ENCODE measurements at regions of chr9 and their contacts with region 1.

Region 1: DNA sequence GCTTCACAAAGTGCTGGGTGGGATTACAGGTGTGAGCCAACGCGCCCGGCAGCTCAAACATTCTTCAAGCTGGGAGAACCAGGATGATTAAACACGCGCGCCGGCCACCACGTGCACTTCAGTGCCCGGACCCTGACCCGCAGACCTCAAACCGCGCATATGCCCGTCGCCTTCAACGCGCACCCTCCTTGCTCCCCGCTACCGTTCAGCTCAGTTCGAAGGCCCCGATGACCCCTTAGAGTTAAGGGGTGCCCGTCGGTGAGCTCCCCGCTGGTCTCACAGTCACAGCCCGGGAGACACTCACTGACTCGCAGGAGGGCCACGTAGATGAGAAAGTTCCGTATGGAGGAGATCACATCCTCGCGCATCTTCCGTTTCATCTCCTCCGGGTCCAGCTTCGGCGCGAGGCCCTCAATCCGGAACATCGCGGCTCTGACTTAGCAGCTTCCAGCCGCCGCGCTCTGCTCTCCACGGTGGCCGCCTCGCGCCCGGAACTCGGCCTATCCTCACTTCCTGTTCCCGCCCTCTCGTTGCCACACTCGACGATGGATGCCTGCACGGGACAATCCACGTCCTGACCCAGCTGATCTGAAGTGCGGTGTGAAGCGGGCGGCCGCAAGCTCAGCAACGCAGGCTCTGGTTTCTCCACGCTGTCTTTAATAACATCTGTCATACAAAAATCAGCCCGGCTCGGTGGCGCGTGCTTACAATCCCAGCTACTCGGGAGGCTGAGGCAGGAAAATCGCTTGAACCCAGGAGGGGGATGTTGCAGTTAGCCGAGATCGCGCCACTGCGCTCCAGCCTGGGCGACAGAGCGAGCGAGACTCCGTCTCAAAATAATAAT is at the start of gene TOMM5:
- DNase-seq: peak; percentile 89
- H3K4me3 ChIP-seq: peak within 1 kb of the TSS; percentile 78
- H3K27ac ChIP-seq: peak within 1 kb of the TSS; percentile 52
- H3K4me1 ChIP-seq: peaks cover 47% of the 10 kb centered on the region
- CTCF ChIP-seq: no peak
- total RNA-seq, gene TOMM5: 215 and 231 TPM in 2 replicates

Region 2: GRCh38 chr9:37575921-37576721 is 16.2 kb before region 1 on chr9 and contains the start of gene FBXO10:
- CTCF ChIA-PET with region 1: interaction called, 5 read pairs
- POLR2A ChIA-PET with region 1: interaction called, 37 read pairs
- intact Hi-C with region 1: no loop called
- DNase-seq: peak; percentile 73
- H3K4me3 ChIP-seq: peak within 1 kb of the TSS; percentile 78
- H3K27ac ChIP-seq: peak within 1 kb of the TSS; percentile 62
- H3K4me1 ChIP-seq: peaks cover 38% of the 10 kb centered on the region
- CTCF ChIP-seq: no peak
- total RNA-seq, gene FBXO10: 9.4 and 16.1 TPM in 2 replicates

Region 3: DNA sequence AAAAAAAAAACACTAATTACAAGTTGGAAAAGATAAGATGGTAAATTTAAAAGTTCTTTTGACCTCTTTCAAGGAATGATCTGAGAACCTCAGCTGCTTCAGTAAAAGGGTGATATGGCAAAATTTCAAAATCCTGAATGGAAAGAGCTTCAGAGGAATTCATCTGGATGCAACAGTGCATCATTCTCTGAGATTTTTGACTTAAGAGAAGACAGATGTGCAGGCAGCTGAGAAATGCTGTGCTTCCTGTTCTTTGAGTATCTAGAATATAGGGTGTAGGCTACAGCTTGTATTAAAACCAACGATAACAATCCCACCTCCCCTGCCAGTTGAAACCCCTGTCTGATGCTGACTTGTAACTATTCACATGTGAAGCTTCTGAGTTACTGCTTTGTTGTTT is 64.6 kb after region 1 on chr9:
- CTCF ChIA-PET with region 1: no interaction called
- POLR2A ChIA-PET with region 1: no interaction called
- intact Hi-C with region 1: no loop called
- DNase-seq: no peak
- H3K4me3 ChIP-seq: no peak overlapping the region
- H3K27ac ChIP-seq: no peak overlapping the region
- H3K4me1 ChIP-seq: no peaks in the 10 kb centered on the region
- CTCF ChIP-seq: no peak

Region 4: GRCh38 chr9:37800631-37801286 is 208.4 kb after region 1 on chr9 and contains the start of gene DCAF10:
- CTCF ChIA-PET with region 1: no interaction called
- POLR2A ChIA-PET with region 1: no interaction called
- intact Hi-C with region 1: loop called (anchors 5 kb)
- DNase-seq: peak; percentile 90
- H3K4me3 ChIP-seq: peak within 1 kb of the TSS; percentile 93
- H3K27ac ChIP-seq: peak within 1 kb of the TSS; percentile 69
- H3K4me1 ChIP-seq: peaks cover 27% of the 10 kb centered on the region
- CTCF ChIP-seq: no peak
- total RNA-seq, gene DCAF10: 10.9 and 12.8 TPM in 2 replicates

Region 5: GRCh38 chr9:37903647-37904444 is 311.5 kb after region 1 on chr9 and contains the start of gene SLC25A51:
- CTCF ChIA-PET with region 1: no interaction called
- POLR2A ChIA-PET with region 1: no interaction called
- intact Hi-C with region 1: loop called (anchors 5 kb)
- DNase-seq: peak; percentile 97
- H3K4me3 ChIP-seq: peak within 1 kb of the TSS; percentile 94
- H3K27ac ChIP-seq: peak within 1 kb of the TSS; percentile 73
- H3K4me1 ChIP-seq: peaks cover 24% of the 10 kb centered on the region
- CTCF ChIP-seq: peak; percentile 92
- total RNA-seq, gene SLC25A51: 20.1 and 31.8 TPM in 2 replicates

Measured in OCI-LY7 (cell line).